Psoas muscle (tissue), 8 donors: ENCODE measurements at regions of chr11 and their contacts with region 1.

Region 1: GRCh38 chr11:5808500-5809121 is at the start of gene OR52N2:
- DNase-seq: peak; percentile 53 to 67
- ATAC-seq: peak; percentile 67 to 88 (median 78)
- H3K4me3 ChIP-seq: peak within 1 kb of the TSS; percentile 58
- H3K27ac ChIP-seq: no peak within 1 kb of the TSS
- H3K4me1 ChIP-seq: no peaks in the 10 kb centered on the region
- H3K27me3 ChIP-seq: no peaks in the 10 kb centered on the region
- CTCF ChIP-seq: peak; percentile 64
- total RNA-seq, gene OR52N2: not detected

Region 2: DNA sequence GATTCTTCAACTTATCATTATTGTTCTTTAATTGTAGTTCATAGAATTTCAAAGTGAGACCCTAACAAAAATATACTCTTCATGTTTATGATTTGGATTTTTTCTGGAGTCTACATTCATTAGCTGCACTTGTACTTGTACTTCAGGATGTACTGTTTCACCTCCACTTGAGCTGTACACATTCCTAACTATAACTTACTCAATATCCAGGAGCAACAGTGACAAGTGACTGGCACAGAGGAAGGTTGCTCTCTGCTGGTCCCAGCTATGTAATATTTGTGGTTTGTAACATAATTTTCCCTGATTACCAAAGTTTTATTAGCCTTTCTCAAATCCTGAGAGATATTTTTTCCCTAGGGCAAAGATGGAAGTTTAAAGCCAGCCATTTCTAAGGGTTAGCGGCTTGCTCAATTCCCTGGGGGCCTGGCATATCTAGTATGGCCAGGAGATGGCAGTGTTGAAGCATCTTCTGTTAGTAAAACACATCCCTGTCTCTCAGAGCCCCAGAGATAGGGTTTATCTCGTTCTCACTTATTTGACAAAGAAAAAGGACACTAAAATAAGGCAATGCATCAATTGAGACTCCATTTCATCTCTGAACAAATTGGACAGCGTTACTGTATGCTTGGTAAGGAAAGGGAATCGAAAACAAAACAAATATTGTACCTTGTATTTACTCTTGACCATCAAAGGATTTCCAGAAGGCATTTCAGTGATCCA is 684.6 kb before region 1 on chr11:
- intact Hi-C with region 1: loop called (anchors 5 to 10 kb)
- DNase-seq: peak; percentile 26 to 60
- ATAC-seq: peak; percentile 58 to 76 (median 70)
- H3K4me3 ChIP-seq: no peak overlapping the region
- H3K27ac ChIP-seq: no peak overlapping the region
- H3K4me1 ChIP-seq: no peaks in the 10 kb centered on the region
- H3K27me3 ChIP-seq: no peaks in the 10 kb centered on the region
- CTCF ChIP-seq: peak; percentile 74

Region 3: DNA sequence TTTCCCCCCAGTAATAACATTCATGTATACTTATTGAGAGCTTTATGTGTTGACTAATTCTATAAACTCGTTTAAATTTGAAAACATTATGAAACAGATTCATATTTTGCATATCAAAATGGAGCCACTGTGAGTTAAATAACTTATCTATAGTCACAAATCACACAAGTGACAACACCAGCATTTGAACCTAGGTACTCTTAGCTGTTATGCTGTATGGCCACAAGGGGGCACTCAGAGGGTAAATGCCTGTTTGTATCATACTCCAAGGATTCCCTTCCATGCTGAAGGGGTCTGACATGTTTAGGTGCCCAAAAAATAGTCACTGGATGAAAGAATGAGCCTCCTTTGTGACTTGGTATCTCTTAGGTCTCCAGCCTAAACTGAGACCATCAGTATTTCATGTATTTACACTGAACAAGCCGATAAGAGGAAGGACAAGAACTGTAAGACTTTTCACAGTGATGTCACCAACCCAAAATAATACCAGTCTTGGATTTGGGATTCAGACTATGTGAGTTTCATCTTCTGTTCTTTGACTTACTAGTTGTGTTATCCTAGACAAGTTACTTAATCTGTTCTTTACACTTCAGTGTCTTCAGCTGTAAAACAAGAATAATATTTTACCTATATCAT is 332.3 kb before region 1 on chr11:
- intact Hi-C with region 1: loop called (anchors 2 to 10 kb)
- DNase-seq: no peak
- ATAC-seq: no peak
- H3K4me3 ChIP-seq: no peak overlapping the region
- H3K27ac ChIP-seq: no peak overlapping the region
- H3K4me1 ChIP-seq: no peaks in the 10 kb centered on the region
- H3K27me3 ChIP-seq: no peaks in the 10 kb centered on the region
- CTCF ChIP-seq: peak; percentile 64

Region 4: DNA sequence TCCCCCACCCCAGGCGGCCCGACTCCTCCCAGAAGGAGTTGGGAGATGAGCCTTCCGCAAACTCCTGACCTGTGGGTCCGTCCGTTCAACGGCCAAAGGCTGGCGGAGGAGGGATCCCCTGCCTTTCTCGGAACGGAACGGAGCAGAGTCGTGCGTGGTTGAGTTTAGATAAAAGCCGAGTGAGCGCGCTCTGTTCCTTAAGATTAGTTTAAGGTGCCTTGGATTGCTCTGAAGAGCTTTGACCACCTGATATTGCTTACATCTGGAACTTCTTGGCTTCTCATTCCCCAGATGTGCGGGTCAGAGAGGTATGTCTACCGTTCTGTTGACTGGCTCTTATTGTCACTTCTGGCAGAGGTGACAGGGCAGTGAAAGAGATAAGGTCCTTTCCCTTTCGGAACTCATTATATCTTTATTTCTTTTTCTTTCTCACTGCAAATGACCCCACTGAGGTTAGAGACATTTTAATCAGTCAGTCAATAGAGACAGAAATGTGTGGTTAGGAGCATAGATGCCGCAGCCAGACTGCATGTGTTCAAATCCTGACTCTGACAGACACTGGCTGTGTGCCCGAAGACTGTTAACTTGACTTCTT is 211.9 kb before region 1 on chr11 and contains the start of gene TRIM6:
- intact Hi-C with region 1: loop called in 1 of 2 experiments (anchors 5 kb)
- DNase-seq: peak; percentile 55 to 73
- ATAC-seq: peak in 1 of 4 donors; percentile 52
- H3K4me3 ChIP-seq: peak within 1 kb of the TSS; percentile 54
- H3K27ac ChIP-seq: no peak within 1 kb of the TSS
- H3K4me1 ChIP-seq: no peaks in the 10 kb centered on the region
- H3K27me3 ChIP-seq: peaks cover 0 to 2% (median 0%) of the 10 kb centered on the region in 3 donors
- CTCF ChIP-seq: no peak
- total RNA-seq, gene TRIM6: 0.44 to 0.78 (median 0.77) TPM in 3 of 4 donors, not detected in the other